Right ventricle myocardium inferior (tissue), 1 donor: ENCODE measurements at regions of chr2 and their contacts with region 1.

Region 1: GRCh38 chr2:204177977-204178540 is 241.5 kb downstream of the ICOS start:
- DNase-seq: no peak
- ATAC-seq: peak; percentile 56

Region 2: GRCh38 chr2:204108330-204108751 is 69.7 kb before region 1 on chr2:
- intact Hi-C with region 1: loop called (anchors 1 kb)
- DNase-seq: no peak
- ATAC-seq: peak; percentile 62

Region 3: DNA sequence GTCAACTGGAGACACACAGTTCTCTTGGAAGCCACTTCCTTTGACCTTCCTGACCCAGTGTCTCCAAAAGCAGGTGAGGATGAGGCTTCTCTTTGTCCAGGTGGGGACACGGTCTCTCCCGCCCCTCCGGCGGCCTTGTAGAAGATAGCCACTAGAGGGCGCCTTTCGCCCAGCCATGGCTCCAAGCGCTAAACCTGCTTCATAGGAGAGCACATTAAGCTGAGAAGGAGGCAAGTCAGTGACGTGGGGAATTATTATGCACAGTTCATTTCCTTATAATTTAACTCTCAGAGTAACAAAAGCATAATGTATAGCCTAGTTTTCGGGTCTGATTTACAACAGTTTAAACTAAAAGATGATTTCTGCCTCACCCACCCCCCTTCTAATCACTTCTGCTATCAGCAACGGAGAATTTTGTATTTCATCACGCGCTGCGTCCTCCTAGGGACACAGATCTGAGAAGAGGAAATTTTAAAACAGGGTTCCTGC is 32.8 kb before region 1 on chr2:
- intact Hi-C with region 1: loop called (anchors 1 kb)
- DNase-seq: peak; percentile 80
- ATAC-seq: peak; percentile 94

Region 4: GRCh38 chr2:204749319-204749718 is 571.3 kb after region 1 on chr2:
- intact Hi-C with region 1: no loop called
- DNase-seq: no peak
- ATAC-seq: no peak